ENCODE measurements at regions of chr4 and their contacts with region 1.

Region 1: GRCh38 chr4:186137196-186137794 is 32.8 kb downstream of the FAM149A start:
- DNase-seq: no peak
- ATAC-seq: no peak

Region 2: DNA sequence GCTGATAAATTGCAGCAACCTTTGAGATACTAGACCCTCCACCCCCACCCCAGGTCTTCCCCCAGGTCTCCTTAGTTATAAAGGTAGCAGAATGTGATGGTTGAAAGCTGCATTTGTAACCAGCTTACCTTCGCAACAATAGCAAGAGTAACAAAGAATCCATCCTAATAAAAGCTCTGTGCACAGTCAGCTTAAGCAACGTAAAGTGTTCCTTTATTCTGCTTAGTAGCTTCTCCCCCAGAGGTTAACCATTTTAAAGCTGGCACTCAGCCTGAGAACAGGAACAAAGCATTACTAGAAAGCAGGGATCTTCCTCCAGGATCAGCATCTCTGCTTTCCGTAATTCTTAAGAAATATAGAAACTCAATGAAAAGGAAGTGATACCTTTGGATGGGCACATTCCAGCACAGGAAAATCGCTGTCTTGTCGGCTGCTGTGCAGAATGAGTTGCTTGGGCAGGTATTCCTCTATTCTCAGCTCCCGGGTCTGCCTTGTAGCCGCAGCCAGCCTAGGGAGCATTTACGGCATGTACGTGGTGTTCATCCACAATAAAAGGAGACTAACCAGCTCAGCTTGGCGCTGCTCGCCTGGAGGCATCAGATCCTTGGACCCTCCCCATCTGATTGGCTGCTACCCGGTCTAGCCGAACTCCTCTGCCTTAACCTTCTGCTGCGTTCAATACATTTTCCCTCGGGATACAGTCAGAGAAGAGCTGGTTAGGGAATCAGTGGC is 181.3 kb before region 1 on chr4:
- intact Hi-C with region 1: no loop called
- DNase-seq: no peak
- ATAC-seq: no peak

Region 3: DNA sequence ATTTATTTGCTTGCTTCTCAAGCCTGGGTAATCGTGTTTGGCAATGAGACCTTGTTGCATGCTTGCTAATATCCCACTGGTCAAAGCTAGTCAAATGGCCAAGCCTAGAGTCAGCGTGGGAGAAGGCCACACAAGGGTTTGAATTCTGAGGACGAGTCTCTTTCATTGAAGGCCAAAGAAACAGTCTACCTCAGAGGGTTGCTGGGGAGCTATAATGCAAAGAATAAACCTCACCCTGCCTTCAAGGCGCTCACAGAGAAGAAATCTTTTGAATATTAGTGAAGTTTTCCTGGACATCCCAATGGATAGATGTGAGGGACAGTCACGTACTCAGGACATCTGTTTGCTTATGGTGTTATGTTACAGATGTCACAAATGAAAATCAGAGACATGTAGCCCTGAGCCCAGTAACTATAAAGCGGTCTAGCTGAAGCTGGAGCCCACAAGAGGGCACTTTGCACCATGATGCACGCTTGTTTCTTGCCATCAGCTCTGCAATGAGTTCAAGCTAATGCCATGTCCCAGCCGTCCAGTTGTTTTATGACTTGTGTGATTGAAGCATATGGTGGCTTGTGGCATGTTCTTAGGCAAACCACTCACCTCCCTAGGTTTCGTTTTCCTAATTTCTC is 69.4 kb before region 1 on chr4:
- intact Hi-C with region 1: loop called (anchors 2 to 10 kb)
- DNase-seq: peak; percentile 64
- ATAC-seq: peak; percentile 92 to 93

Region 4: GRCh38 chr4:186074189-186074588 is 63.1 kb before region 1 on chr4:
- intact Hi-C with region 1: loop called (anchors 2 to 10 kb)
- DNase-seq: no peak
- ATAC-seq: peak; percentile 53 to 73

Measured in left cardiac atrium (tissue), 4 donors.